HCT116 (cell line): ENCODE measurements at regions of chr1 and their contacts with region 1.

Region 1: DNA sequence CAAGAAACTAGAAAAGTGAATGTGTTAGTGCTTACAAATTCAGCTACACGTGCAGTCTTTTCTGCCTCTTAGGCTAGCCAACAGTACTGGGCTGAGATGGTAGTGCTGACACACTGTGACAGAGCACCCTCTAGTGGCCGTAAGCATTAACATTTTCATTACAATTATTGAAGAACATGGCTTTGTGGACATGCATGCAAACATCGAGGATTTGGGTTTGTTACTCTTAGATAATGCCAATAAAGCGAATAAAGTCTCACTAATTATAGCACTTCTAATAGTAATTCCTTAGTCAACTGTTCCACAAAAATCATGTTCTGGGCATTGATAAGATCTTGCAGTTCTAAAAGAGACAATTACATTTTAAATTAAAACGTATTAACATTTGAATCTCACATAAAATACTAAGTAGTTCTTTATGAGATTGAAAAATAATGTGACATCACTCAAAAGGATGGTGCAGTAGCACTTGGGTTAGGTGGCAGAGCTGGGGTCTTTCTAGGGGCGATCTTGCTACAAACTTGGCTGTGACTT is 47.1 kb downstream of the MYSM1 start:
- DNase-seq: peak; percentile 48
- ATAC-seq: peak; percentile 90
- H3K4me3 ChIP-seq: no peak overlapping the region
- H3K27ac ChIP-seq: no peak overlapping the region
- H3K4me1 ChIP-seq: no peaks in the 10 kb centered on the region
- H3K27me3 ChIP-seq: no peaks in the 10 kb centered on the region
- CTCF ChIP-seq: peak; percentile 69 to 92 (median 77)
- POLR2A ChIP-seq: no peak
- RAD21 ChIP-seq: peak; percentile 97

Region 2: DNA sequence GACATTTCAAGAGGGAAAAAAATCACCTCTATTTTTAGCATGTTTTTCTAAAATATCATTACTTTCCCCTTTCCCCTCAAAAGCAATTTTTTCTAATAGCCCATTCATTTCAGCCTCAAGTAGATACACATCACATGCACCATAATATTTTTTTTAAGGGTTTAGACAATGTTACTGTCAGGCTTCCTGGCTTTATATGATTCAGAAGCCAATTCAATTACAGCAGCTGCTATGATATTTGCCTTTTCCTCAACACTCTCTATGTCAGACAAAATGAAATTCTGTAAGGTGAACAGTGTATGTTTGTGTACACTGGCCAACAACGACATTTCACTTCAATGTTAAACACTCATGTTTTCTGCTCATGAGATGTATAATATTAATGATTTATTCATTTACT is 152.7 kb before region 1 on chr1:
- CTCF ChIA-PET with region 1: no interaction called
- POLR2A ChIA-PET with region 1: no interaction called
- RAD21 ChIA-PET with region 1: no interaction called
- intact Hi-C with region 1: no loop called
- DNase-seq: no peak
- ATAC-seq: no peak
- H3K4me3 ChIP-seq: no peak overlapping the region
- H3K27ac ChIP-seq: no peak overlapping the region
- H3K4me1 ChIP-seq: no peaks in the 10 kb centered on the region
- H3K27me3 ChIP-seq: no peaks in the 10 kb centered on the region
- CTCF ChIP-seq: no peak
- POLR2A ChIP-seq: no peak
- RAD21 ChIP-seq: no peak

Region 3: DNA sequence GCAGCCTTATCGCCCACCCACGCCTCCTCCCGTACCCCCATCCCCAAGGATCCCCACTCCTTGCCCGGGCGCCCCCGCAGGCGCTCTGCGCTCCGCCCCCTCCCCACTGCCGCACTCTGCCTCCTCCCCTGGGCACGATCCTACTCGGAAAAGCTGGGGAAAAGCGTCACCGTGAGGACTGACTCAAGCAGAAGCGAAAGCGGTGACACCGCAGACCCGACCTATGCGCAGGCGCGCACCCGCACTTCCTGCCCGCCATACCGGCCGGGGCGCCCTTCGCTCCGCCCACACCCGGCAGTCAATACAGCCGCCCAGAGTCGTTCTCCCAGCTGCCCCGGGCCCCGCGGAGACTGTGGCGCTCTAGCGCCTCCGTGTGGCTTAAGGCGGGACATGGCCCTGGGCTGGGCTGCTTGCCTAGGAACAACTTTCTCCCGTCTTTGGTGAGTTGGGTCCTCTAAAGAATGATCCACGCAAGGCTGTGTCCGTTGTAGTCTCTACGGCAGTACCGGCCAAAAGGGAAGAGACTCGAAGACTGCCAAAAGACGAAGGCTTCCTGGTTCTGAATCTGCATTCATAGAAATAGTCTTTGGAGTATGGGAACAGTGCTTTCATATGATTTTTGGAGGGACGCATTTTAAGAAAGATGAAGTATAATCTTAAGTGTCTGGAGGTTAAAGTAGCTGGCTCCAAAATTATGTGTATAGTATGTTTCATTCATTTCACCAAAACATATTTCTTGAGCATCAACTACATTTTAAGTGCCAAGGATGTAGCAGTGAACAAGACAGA is 106.0 kb before region 1 on chr1 and contains the start of gene OMA1:
- CTCF ChIA-PET with region 1: interaction called, 11 read pairs
- POLR2A ChIA-PET with region 1: interaction called, 4 read pairs
- RAD21 ChIA-PET with region 1: interaction called, 3 to 5 read pairs
- intact Hi-C with region 1: no loop called
- DNase-seq: peak; percentile 89
- ATAC-seq: peak; percentile 95
- H3K4me3 ChIP-seq: peak within 1 kb of the TSS; percentile 70 to 91
- H3K27ac ChIP-seq: peak within 1 kb of the TSS; percentile 86
- H3K4me1 ChIP-seq: peaks cover 6 to 17% of the 10 kb centered on the region in 2 experiments; a peak in 3 of 4 replicates
- H3K27me3 ChIP-seq: no peaks in the 10 kb centered on the region
- CTCF ChIP-seq: peak; percentile 89 to 97 (median 92)
- POLR2A ChIP-seq: peak; percentile 31
- RAD21 ChIP-seq: peak; percentile 96
- total RNA-seq, gene OMA1: 21.9 TPM

Region 4: GRCh38 chr1:59759156-59759925 is 1106.6 kb after region 1 on chr1:
- CTCF ChIA-PET with region 1: no interaction called
- POLR2A ChIA-PET with region 1: no interaction called
- RAD21 ChIA-PET with region 1: no interaction called
- intact Hi-C with region 1: loop called (anchors 5 kb)
- DNase-seq: peak; percentile 59
- ATAC-seq: peak; percentile 96
- H3K4me3 ChIP-seq: 0 out of 4 replicates have a peak overlapping the region, but pooled peaks of 1 of the 2 experiments have one; percentile 7
- H3K27ac ChIP-seq: no peak overlapping the region
- H3K4me1 ChIP-seq: peaks cover 0 to 8% of the 10 kb centered on the region in 2 experiments; a peak in 2 of 4 replicates
- H3K27me3 ChIP-seq: no peaks in the 10 kb centered on the region
- CTCF ChIP-seq: peak; percentile 67 to 95 (median 92)
- POLR2A ChIP-seq: no peak
- RAD21 ChIP-seq: peak; percentile 99